Activated CD4-positive, alpha-beta T cell treated with anti-CD3 and anti-CD28 coated beads, Interleukin-2, amount 10 ng/mL, durations not matched to agents 24 days and 14 days (primary cell): ENCODE measurements at regions of chr5 and their contacts with region 1.

Region 1: GRCh38 chr5:53069626-53070025 is 39.9 kb downstream of the MOCS2 start:
- DNase-seq: peak; percentile 92
- H3K4me3 Mint-ChIP-seq: peak overlapping the region; percentile 54
- H3K27ac Mint-ChIP-seq: peak overlapping the region; percentile 85
- H3K4me1 Mint-ChIP-seq: peaks cover 28% of the 10 kb centered on the region
- H3K27me3 Mint-ChIP-seq: no peaks in the 10 kb centered on the region

Region 2: GRCh38 chr5:52948418-52949076 is 121.1 kb before region 1 on chr5:
- intact Hi-C with region 1: loop called (anchors 1 kb)
- DNase-seq: peak; percentile 92
- H3K4me3 Mint-ChIP-seq: no peak overlapping the region
- H3K27ac Mint-ChIP-seq: peak overlapping the region; percentile 46
- H3K4me1 Mint-ChIP-seq: peaks cover 19% of the 10 kb centered on the region
- H3K27me3 Mint-ChIP-seq: peaks cover 1% of the 10 kb centered on the region

Region 3: GRCh38 chr5:53031695-53032096 is 37.9 kb before region 1 on chr5:
- intact Hi-C with region 1: loop called (anchors 1 kb)
- DNase-seq: peak; percentile 86
- H3K4me3 Mint-ChIP-seq: peak overlapping the region; percentile 53
- H3K27ac Mint-ChIP-seq: peak overlapping the region; percentile 80
- H3K4me1 Mint-ChIP-seq: peaks cover 57% of the 10 kb centered on the region
- H3K27me3 Mint-ChIP-seq: no peaks in the 10 kb centered on the region

Region 4: GRCh38 chr5:53080271-53080670 is 10.6 kb after region 1 on chr5:
- intact Hi-C with region 1: loop called (anchors 1 kb)
- DNase-seq: peak; percentile 71
- H3K4me3 Mint-ChIP-seq: no peak overlapping the region
- H3K27ac Mint-ChIP-seq: peak overlapping the region; percentile 62
- H3K4me1 Mint-ChIP-seq: peaks cover 41% of the 10 kb centered on the region
- H3K27me3 Mint-ChIP-seq: no peaks in the 10 kb centered on the region

Region 5: GRCh38 chr5:53109443-53110127 is 40.0 kb after region 1 on chr5 and contains the start of gene MOCS2:
- intact Hi-C with region 1: loop called (anchors 1 kb)
- DNase-seq: peak; percentile 98
- H3K4me3 Mint-ChIP-seq: peak within 1 kb of the TSS; percentile 91
- H3K27ac Mint-ChIP-seq: peak within 1 kb of the TSS; percentile 89
- H3K4me1 Mint-ChIP-seq: peaks cover 31% of the 10 kb centered on the region
- H3K27me3 Mint-ChIP-seq: no peaks in the 10 kb centered on the region
- total RNA-seq, gene MOCS2: 16.5 and 18.4 TPM in 2 replicates

Region 6: DNA sequence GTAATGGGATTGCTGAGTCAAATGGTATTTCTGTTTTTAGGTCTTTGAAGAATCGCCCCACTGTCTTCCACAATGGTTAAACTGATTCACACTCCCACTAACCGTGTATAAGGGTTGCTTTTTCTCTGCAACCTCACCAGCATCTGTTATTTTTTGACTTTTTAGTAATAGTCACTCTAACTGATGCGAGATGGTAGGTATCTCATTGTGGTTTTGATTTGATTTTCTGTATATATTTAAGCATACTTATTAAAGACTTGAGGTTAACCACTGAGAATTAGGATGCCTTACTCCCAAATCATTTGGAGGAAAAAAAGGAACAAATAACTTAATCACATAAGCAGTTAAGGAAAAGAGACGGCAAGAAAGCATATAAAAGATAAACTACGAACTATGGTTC is 229.2 kb after region 1 on chr5:
- intact Hi-C with region 1: no loop called
- DNase-seq: no peak
- H3K4me3 Mint-ChIP-seq: no peak overlapping the region
- H3K27ac Mint-ChIP-seq: no peak overlapping the region
- H3K4me1 Mint-ChIP-seq: peaks cover 6% of the 10 kb centered on the region
- H3K27me3 Mint-ChIP-seq: no peaks in the 10 kb centered on the region

Region 7: GRCh38 chr5:53463909-53464621 is 394.4 kb after region 1 on chr5:
- intact Hi-C with region 1: no loop called
- DNase-seq: no peak
- H3K4me3 Mint-ChIP-seq: no peak overlapping the region
- H3K27ac Mint-ChIP-seq: no peak overlapping the region
- H3K4me1 Mint-ChIP-seq: no peaks in the 10 kb centered on the region
- H3K27me3 Mint-ChIP-seq: peaks cover 21% of the 10 kb centered on the region